ENCODE measurements at regions of chr15 and their contacts with region 1.

Region 1: GRCh38 chr15:97909291-97909891 is 51.1 kb upstream of the ARRDC4 start:
- DNase-seq: peak; percentile 79
- H3K4me3 Mint-ChIP-seq: no peak overlapping the region
- H3K27ac Mint-ChIP-seq: no peak overlapping the region
- H3K4me1 Mint-ChIP-seq: no peaks in the 10 kb centered on the region
- H3K27me3 Mint-ChIP-seq: peaks cover 61% of the 10 kb centered on the region
- CTCF ChIP-seq: peak; percentile 87

Region 2: DNA sequence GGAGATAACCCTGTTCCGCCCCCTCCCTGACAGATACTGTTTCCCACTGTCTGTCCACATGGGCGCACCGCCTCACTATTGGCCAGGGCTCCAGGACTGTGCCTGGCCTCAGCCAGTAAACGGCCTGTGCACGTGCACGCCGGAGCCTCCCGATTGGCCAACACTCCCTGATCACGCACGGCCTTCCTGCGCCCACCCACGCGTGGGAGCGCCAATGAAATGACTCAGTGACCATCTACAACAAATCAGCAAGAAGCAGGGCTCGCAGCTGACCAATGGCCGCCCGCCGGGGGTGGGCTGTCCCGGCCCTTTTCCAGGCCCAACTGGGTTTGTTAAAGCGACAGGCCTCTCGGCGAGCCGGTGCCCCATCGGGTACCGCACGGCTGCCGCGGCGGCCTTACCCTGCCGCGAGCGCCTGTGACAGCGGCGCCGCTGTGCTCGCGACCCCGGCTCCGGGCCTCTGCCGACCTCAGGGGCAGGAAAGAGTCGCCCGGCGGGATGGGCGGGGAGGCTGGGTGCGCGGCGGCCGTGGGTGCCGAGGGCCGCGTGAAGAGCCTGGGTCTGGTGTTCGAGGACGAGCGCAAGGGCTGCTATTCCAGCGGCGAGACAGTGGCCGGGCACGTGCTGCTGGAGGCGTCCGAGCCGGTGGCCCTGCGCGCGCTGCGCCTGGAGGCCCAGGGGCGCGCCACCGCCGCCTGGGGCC is 51.1 kb after region 1 on chr15 and contains the start of gene ARRDC4:
- CTCF ChIA-PET with region 1: no interaction called
- intact Hi-C with region 1: loop called (anchors 2 kb)
- DNase-seq: peak; percentile 99
- H3K4me3 Mint-ChIP-seq: peak within 1 kb of the TSS; percentile 93
- H3K27ac Mint-ChIP-seq: peak within 1 kb of the TSS; percentile 98
- H3K4me1 Mint-ChIP-seq: peaks cover 32% of the 10 kb centered on the region
- H3K27me3 Mint-ChIP-seq: no peaks in the 10 kb centered on the region
- CTCF ChIP-seq: no peak
- total RNA-seq, gene ARRDC4: 3.0 and 3.2 TPM in 2 replicates

Region 3: GRCh38 chr15:97995881-97996603 is 86.7 kb after region 1 on chr15:
- CTCF ChIA-PET with region 1: no interaction called
- intact Hi-C with region 1: loop called (anchors 5 kb)
- DNase-seq: peak; percentile 65
- H3K4me3 Mint-ChIP-seq: peak overlapping the region; percentile 21
- H3K27ac Mint-ChIP-seq: peak overlapping the region; percentile 60
- H3K4me1 Mint-ChIP-seq: peaks cover 20% of the 10 kb centered on the region
- H3K27me3 Mint-ChIP-seq: no peaks in the 10 kb centered on the region
- CTCF ChIP-seq: peak; percentile 69

Region 4: DNA sequence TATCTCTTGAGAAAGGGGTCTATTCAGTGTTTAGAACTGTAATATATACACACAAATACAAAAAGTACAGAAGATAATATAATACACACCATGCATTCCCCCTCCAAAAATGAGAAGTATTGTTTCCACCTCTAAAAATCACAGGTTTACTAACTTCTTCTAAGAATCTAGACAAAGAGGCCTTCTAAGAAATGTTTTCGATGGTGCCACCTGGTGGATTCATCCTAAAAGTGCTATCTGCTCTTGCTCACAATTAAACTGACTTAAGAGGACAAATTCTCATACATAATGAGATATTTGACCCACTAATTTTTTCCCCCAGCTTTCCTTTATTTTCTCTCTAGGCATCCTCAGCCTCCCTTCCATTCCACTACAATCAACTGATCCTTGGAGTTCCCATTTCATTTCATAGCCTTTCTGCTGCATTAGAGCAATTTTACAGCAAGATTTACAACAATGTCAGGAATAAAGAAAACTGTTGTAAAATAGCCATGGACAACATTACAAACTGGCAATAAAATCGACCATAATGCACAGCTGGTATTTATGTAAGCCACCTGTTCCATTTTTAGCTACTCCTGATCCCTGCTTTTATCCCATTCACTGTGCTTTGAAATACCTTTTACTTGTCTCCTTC is 175.7 kb after region 1 on chr15:
- CTCF ChIA-PET with region 1: no interaction called
- intact Hi-C with region 1: loop called (anchors 1 kb)
- DNase-seq: peak; percentile 61
- H3K4me3 Mint-ChIP-seq: no peak overlapping the region
- H3K27ac Mint-ChIP-seq: no peak overlapping the region
- H3K4me1 Mint-ChIP-seq: no peaks in the 10 kb centered on the region
- H3K27me3 Mint-ChIP-seq: no peaks in the 10 kb centered on the region
- CTCF ChIP-seq: peak; percentile 35

Region 5: DNA sequence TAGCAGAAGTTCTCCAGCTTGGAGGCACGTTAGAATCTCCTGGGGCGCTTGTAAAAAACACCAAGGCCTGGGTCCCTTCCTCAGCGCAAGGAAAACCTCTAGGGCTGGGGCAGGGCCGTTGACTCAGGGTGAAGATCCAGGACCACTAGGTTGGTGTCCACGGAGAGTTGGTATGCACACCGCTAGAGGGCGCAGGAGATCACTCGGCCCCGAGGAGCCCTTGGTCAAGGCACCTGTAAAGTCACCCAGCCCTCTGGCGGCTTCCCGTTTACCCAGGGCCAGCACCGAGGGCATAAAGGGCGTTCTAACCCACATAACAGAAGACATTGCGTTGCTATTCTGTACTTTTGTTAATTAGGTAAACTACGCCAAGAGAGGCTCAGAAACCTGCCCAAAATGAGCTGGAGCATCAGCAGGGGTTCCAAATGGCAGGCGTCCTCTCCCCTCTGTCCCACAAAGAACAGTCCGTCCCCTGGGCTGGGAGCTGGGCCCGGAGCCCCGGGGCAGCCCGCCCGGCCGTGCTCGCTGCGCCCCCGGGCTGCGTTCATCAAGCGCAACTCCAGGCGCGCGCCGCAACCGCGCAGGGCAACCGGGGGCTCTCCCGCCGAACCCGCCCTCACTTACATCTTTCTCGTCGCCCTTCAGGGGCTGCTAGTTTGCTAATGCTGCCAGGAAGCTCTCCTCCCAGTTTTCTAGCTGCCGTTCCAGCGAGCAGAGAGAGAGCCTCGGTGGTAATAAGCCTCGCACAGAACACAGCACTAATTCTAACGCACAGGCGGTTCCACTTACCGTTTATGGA is 383.2 kb after region 1 on chr15:
- CTCF ChIA-PET with region 1: no interaction called
- intact Hi-C with region 1: loop called (anchors 1 kb)
- DNase-seq: peak; percentile 72
- H3K4me3 Mint-ChIP-seq: no peak overlapping the region
- H3K27ac Mint-ChIP-seq: no peak overlapping the region
- H3K4me1 Mint-ChIP-seq: no peaks in the 10 kb centered on the region
- H3K27me3 Mint-ChIP-seq: peaks cover 41% of the 10 kb centered on the region
- CTCF ChIP-seq: peak; percentile 61